Brain microvascular endothelial cell (primary cell): ENCODE measurements at regions of chr11 and their contacts with region 1.

Region 1: DNA sequence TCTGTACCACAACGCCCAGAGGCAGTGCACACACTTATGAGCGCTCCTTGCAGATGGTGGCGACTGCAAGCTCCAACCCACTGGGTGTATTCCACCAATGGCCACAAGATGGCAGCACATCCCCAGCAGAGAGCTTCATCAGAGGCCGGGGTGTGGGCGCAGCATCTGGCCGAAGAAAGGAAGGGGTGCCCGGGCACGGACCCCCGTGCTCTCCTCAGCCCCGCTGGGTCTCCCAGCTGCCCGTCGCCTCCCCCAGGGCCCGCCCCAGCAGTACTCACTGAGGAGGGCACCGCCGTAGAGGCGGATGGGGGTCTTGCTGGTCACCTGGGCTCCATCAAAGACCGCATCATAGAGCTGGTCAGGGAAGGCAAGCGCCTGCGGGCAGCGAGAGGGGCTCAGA is 14.2 kb downstream of the TP53I11 start:
- DNase-seq: peak; percentile 78
- H3K4me3 ChIP-seq: no peak overlapping the region
- H3K27ac ChIP-seq: no peak overlapping the region
- H3K27me3 ChIP-seq: peaks cover 3% of the 10 kb centered on the region
- CTCF ChIP-seq: peak; percentile 92

Region 2: DNA sequence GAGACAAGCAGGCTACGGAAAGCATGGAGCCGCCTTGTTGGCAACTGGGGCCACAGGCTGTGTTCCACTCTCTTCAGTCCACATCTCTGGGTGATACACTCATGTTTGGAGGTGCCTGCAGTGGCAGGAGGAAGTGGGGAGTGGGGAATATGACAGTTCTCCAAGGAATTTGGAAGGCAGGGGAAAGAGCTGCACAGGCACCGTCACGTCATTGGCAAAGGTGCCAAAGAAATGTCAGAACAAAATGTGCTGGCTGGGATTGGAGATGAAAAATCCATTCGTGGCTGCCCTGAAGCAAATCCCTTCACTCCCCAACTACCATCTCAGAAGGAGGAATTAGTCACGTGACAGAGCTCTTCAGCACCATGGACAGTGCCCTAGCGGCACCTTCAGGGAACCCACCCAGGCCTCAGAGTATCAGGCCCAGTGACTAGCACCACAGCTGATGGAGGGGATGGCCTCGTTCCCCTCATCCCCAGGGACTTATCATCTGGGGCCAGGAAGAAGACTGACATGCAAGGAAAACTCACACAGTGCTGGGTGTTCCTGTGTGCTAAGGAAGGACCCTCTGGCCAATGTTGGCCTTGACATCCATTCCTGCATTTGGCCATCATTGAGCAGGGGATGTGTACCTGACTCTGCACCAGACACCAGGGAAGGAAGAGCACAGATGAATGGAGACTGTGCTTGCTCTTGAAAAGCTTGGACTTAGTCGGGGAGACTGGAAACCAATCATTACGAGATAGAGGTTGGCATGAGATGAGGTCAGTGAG is 161.4 kb after region 1 on chr11:
- in situ Hi-C with region 1: loop called (anchors 10 kb)
- DNase-seq: peak; percentile 32
- H3K4me3 ChIP-seq: no peak overlapping the region
- H3K27ac ChIP-seq: no peak overlapping the region
- H3K27me3 ChIP-seq: peaks cover 18% of the 10 kb centered on the region
- CTCF ChIP-seq: no peak